Activated CD8-positive, alpha-beta memory T cell treated with anti-CD3 and anti-CD28 coated beads, Interleukin-2, amount 10 ng/mL, durations not matched to agents 7 days and 5 days (primary cell): ENCODE measurements at regions of chr17 and their contacts with region 1.

Region 1: DNA sequence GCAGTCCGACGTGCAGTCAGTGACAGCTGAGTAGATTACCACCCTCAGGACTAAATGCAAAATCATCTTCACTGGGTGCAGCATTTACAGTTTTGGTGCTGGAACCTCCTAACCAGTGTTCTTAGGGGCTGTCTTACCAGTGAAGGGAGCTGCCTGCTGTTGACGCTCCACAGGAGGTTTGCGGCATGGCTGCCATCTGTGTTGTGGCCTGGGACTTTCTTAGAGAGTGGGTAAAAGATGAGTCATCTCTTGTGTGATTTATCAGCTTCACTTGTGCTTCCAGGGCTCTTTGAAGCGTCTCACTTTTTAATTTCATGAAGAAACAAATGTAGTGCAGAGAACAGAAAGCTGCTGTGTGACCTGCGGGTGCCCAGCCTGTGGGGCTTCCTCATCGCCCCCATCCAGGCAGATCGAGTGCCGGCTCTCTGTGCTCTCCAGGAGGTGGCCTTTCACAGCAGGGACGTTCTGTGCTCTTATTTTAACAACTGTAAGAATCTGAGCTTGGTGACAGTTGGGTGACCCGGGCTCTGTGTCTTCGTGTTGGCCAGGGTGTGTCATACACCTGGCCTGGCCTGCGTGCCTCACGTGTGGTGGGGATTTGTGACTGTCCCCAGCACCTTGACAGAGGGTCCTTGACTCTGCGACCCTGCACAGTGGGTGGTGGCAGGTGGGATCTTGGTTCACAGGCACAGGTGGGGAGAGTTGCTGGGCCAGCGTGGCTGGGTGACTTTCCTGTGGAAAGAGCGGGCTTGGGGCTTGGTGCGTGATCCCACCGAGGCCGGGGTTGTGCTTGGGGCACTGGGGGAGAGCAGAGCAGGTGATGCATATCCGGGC is 24.3 kb upstream of the ZNF750 start:
- DNase-seq: peak; percentile 98
- ATAC-seq: peak; percentile 92
- H3K4me3 Mint-ChIP-seq: peak overlapping the region; percentile 78
- H3K27ac Mint-ChIP-seq: peak overlapping the region; percentile 99
- H3K4me1 Mint-ChIP-seq: peaks cover 62% of the 10 kb centered on the region
- H3K27me3 Mint-ChIP-seq: no peaks in the 10 kb centered on the region

Region 2: DNA sequence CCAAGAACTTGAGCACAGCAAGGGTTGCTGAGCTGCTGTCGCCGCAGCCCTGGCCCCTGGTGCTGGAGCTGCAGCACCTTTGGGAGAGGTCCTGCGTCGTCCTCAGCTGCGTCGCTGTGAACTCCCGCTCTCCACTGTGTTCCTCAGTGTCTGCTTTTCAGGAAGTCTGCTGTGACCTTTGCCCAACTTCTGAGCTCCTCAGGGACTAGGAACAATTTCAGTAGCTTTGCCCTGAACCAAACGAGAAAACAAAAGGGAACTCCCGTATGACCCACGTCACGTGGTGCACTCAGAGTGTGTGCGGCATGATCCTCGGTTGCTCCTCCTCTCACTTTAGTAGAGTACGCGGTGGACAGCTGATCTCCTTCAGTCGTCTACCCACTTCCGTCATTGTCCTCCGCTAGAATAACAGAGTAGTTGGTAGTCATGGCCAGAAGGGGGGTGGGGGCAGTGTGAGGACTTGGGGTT is 260.1 kb before region 1 on chr17:
- CTCF ChIA-PET with region 1: no interaction called
- DNase-seq: no peak
- ATAC-seq: peak; percentile 71
- H3K4me3 Mint-ChIP-seq: no peak overlapping the region
- H3K27ac Mint-ChIP-seq: peak overlapping the region; percentile 41
- H3K4me1 Mint-ChIP-seq: peaks cover 15% of the 10 kb centered on the region
- H3K27me3 Mint-ChIP-seq: no peaks in the 10 kb centered on the region

Region 3: DNA sequence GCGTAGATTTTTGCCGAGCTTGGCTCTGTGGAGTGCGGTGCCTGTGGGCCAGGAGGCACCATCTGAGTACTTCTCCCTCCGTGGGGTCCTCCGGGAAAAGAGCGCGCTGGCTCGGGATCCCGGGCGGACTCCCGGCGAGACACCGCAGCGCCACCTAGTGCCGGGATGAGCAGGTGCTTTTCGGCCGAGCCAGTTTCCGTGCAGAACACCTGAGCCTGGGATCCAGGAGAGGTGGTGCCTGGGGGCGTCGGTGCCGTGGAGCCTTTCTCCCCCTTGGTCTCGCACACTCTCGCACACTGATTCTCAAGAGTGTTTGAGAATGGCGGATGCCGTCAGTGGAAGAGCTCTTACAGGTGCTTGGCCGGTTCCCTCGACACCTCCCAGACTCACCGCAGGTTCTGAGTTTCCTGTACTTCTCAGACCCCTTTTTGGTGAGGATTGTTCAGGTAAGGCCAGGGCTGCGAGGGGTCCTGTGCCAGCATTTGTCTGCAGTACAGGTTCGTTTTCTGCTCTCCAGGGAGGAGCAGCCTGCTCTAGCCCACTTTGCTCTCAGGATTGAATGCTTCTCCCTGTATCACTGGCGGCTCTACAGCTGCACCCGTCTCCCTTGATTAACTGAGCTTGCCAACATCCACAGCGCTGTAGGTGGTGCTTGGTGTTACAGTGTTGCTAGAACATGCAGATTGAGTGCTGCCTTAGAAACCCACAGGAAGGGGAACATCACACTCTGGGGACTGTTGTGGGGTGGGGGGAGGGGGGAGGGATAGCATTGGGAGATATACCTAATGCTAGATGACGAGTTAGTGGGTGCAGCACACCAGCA is 88.9 kb before region 1 on chr17:
- CTCF ChIA-PET with region 1: interaction called, 13 read pairs
- DNase-seq: peak; percentile 64
- ATAC-seq: peak; percentile 78
- H3K4me3 Mint-ChIP-seq: peak overlapping the region; percentile 39
- H3K27ac Mint-ChIP-seq: peak overlapping the region; percentile 82
- H3K4me1 Mint-ChIP-seq: peaks cover 31% of the 10 kb centered on the region
- H3K27me3 Mint-ChIP-seq: no peaks in the 10 kb centered on the region

Region 4: DNA sequence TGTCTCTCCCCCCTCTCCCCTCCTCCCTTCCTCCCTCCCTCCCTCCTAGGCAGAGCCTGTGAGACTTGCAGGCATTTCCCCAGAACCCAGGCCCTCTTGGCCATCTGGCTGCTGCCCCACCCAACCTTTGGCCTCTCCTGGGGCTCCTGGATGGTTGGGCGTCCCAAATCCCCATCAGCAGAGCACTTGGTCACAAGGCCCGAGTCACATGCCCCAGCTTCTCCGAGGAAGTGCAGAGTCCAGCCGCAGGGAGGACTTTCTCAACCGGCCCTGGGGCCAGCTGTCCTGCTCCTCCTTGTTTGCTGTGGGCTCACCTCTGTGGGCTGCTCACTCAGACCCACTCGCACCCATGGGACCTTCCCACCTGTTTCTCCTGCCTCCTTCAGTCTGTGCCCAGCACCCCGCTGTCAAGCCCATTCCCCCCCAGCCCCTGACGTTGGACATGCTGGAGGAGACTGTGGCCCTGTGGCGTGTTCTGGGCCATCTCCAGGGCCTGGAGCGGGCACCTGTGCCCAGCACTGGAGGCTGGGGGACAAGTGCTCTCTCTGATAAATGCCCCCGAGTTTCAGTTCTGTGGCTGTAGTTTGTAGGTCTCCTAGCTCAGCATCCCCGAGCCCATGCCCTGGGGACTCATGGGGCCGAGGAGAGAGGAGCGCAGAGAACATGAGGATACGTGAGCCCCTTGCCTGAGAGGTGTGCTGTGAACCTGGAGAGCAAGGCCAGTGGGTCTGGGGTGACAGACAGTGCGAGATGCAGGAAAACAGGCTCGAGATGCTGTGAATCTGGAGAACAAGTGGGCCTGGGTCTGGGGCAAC is 17.9 kb after region 1 on chr17:
- CTCF ChIA-PET with region 1: interaction called, 38 read pairs
- DNase-seq: no peak
- ATAC-seq: no peak
- H3K4me3 Mint-ChIP-seq: peak overlapping the region; percentile 71
- H3K27ac Mint-ChIP-seq: peak overlapping the region; percentile 97
- H3K4me1 Mint-ChIP-seq: peaks cover 79% of the 10 kb centered on the region
- H3K27me3 Mint-ChIP-seq: no peaks in the 10 kb centered on the region

Region 5: GRCh38 chr17:82892899-82893565 is 28.9 kb after region 1 on chr17:
- CTCF ChIA-PET with region 1: interaction called, 12 read pairs
- DNase-seq: peak; percentile 90
- ATAC-seq: peak; percentile 91
- H3K4me3 Mint-ChIP-seq: peak overlapping the region; percentile 63
- H3K27ac Mint-ChIP-seq: peak overlapping the region; percentile 88
- H3K4me1 Mint-ChIP-seq: peaks cover 36% of the 10 kb centered on the region
- H3K27me3 Mint-ChIP-seq: no peaks in the 10 kb centered on the region